ENCODE measurements at regions of chr21 and their contacts with region 1.

Region 1: GRCh38 chr21:43810505-43811261 is 21.3 kb downstream of the RRP1 start:
- DNase-seq: peak; percentile 90

Region 2: GRCh38 chr21:43938751-43939442 is 128.2 kb after region 1 on chr21:
- intact Hi-C with region 1: loop called (anchors 1 kb)
- DNase-seq: peak; percentile 91

Region 3: GRCh38 chr21:43975495-43975993 is 164.9 kb after region 1 on chr21:
- intact Hi-C with region 1: loop called (anchors 1 kb)
- DNase-seq: peak; percentile 89